WTC11 (cell line): ENCODE measurements at regions of chr9 and their contacts with region 1.

Region 1: DNA sequence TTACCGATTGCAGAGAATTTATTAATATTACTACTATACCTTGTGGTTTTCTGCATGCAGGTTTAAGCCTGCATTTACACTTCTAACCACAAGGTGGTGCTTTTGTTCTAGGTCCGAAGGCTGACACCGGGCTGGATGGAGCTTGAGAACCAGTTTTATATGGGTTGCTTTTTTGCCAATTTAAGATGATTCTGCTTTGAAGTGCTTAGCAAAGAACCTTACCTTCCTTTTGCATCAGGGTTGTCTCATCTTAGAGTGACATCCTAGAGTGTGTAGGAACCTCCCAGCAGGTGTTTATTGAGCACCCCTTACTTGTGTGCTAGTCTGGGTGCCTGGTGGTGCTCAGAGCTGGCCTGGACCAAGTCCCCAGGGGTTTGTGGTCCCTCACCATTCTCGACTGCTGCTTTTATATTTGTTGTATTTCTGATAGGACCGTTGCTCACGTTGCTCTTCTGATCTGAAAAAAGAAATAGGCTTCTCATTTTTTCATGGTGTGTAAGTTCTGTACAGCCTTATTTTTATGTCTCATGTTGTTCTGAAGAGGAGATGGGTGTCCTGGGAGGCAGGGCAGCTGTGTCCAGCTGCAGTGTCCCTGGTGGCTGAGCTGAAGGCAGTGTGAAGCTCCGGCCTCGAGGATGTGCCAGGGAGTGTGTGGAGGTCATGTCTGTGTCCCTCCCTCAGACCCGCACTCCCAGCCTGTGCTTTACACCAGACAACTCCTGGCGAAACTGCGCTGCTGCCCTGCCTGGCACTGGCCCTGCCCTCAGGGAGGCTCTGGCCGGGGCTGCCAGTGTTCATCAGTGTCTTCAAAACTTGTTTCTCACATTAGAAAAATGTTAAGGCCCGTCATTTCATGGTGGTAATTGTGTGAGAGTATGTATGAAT is 54.3 kb downstream of the EHMT1 start:
- DNase-seq: no peak
- ATAC-seq: no peak
- H3K4me3 Mint-ChIP-seq: no peak overlapping the region
- H3K27ac Mint-ChIP-seq: peak overlapping the region; percentile 97
- H3K4me1 Mint-ChIP-seq: peaks cover 86% of the 10 kb centered on the region
- H3K27me3 Mint-ChIP-seq: no peaks in the 10 kb centered on the region
- CTCF ChIP-seq: peak; percentile 73

Region 2: DNA sequence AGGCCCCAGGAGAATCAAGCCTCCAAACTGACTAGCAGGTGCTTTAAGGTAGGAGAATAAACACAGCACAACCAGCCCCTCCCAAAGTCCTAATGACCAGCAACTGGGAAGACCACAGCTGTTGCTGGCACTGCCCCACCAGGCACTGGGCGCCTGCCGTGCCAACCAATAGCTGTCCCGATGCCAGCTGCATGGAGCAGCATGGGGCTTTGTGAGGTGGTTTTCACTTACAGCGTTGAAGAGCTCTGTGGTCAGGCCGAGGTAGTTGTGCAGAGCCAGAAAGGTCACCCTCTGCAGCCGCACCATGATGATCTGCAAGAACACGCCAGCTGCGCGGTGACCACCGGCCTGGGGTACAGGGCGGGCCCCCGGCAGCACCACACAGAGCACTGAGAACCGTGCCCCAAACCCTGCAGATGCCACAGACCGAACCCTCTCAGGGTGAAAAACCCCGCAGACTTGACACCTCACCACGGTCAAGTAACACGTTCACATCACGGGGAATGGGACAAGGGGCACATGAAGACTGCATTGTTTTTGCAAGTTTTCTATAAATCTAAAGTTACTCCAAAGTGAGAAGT is 151.7 kb before region 1 on chr9:
- CTCF ChIA-PET with region 1: no interaction called
- POLR2A ChIA-PET with region 1: no interaction called
- DNase-seq: no peak
- ATAC-seq: no peak
- H3K4me3 Mint-ChIP-seq: no peak overlapping the region
- H3K27ac Mint-ChIP-seq: no peak overlapping the region
- H3K4me1 Mint-ChIP-seq: no peaks in the 10 kb centered on the region
- H3K27me3 Mint-ChIP-seq: no peaks in the 10 kb centered on the region
- CTCF ChIP-seq: no peak

Region 3: GRCh38 chr9:137639303-137640051 is 33.7 kb before region 1 on chr9:
- CTCF ChIA-PET with region 1: interaction called, 11 read pairs
- POLR2A ChIA-PET with region 1: no interaction called
- DNase-seq: no peak
- ATAC-seq: no peak
- H3K4me3 Mint-ChIP-seq: no peak overlapping the region
- H3K27ac Mint-ChIP-seq: peak overlapping the region; percentile 59; the same call in 1 of the 2 replicates
- H3K4me1 Mint-ChIP-seq: peaks cover 5% of the 10 kb centered on the region
- H3K27me3 Mint-ChIP-seq: no peaks in the 10 kb centered on the region; the same call in 1 of the 2 replicates
- CTCF ChIP-seq: no peak

Region 4: GRCh38 chr9:137689745-137690529 is 16.8 kb after region 1 on chr9:
- CTCF ChIA-PET with region 1: interaction called, 113 read pairs
- POLR2A ChIA-PET with region 1: interaction called, 4 read pairs
- DNase-seq: no peak
- ATAC-seq: no peak
- H3K4me3 Mint-ChIP-seq: no peak overlapping the region
- H3K27ac Mint-ChIP-seq: peak overlapping the region; percentile 55
- H3K4me1 Mint-ChIP-seq: peaks cover 71% of the 10 kb centered on the region
- H3K27me3 Mint-ChIP-seq: no peaks in the 10 kb centered on the region
- CTCF ChIP-seq: no peak

Region 5: GRCh38 chr9:137694967-137695879 is 22.1 kb after region 1 on chr9:
- CTCF ChIA-PET with region 1: interaction called, 113 read pairs
- POLR2A ChIA-PET with region 1: interaction called, 3 read pairs
- DNase-seq: peak; percentile 85
- ATAC-seq: peak; percentile 91
- H3K4me3 Mint-ChIP-seq: no peak overlapping the region
- H3K27ac Mint-ChIP-seq: peak overlapping the region; percentile 98
- H3K4me1 Mint-ChIP-seq: peaks cover 71% of the 10 kb centered on the region
- H3K27me3 Mint-ChIP-seq: no peaks in the 10 kb centered on the region
- CTCF ChIP-seq: peak; percentile 59

Region 6: GRCh38 chr9:137772281-137772873 is 99.2 kb after region 1 on chr9:
- CTCF ChIA-PET with region 1: interaction called, 34 read pairs
- POLR2A ChIA-PET with region 1: no interaction called
- DNase-seq: peak; percentile 60
- ATAC-seq: peak; percentile 89
- H3K4me3 Mint-ChIP-seq: no peak overlapping the region
- H3K27ac Mint-ChIP-seq: no peak overlapping the region
- H3K4me1 Mint-ChIP-seq: peaks cover 5% of the 10 kb centered on the region
- H3K27me3 Mint-ChIP-seq: no peaks in the 10 kb centered on the region
- CTCF ChIP-seq: no peak